CD8-positive, alpha-beta T cell (primary cell): ENCODE measurements at regions of chr15 and their contacts with region 1.

Region 1: DNA sequence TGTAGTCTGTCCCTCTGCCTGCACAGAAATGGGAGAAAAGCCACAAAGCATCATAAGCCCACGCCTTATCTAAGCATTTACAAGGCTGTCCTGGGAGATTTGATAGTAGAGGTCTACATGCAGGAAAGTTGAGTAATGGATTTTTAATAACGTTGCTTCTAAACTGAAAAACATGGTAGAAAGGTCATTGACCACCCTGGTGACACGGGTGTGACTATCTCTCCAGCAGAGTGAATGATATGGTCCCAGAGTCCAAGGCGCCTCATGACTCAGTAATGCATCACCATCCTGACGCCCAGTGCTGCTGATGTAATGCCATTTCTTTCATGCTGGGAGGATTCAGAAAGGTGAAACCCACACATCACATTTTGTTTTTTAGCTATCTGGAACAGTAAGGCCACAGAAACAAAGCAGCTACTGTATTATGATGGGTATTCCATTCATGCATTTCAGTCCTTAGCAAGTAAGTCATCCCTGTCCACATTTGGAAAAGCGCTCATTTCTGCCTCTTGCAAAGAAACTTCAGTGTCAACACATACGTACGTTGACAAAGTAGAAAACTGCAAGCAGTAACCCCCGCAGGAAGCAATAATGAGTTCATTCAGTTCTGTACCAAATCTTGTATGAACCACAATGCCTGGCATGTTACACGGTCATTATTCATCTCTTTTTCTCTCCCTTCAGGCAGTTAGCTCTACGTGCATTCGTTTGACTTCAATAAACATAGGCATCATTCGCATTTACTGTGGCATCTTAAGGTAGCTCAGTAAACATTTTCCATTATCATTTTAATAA is 483.5 kb downstream of the GABRG3 start:
- DNase-seq: no peak
- ATAC-seq: no peak
- H3K4me3 ChIP-seq: no peak overlapping the region
- H3K4me3 Mint-ChIP-seq: no peak overlapping the region
- H3K27ac ChIP-seq: no peak overlapping the region
- H3K27ac Mint-ChIP-seq: no peak overlapping the region
- H3K4me1 ChIP-seq: no peaks in the 10 kb centered on the region
- H3K4me1 Mint-ChIP-seq: no peaks in the 10 kb centered on the region
- H3K27me3 ChIP-seq: no peaks in the 10 kb centered on the region
- H3K27me3 Mint-ChIP-seq: no peaks in the 10 kb centered on the region
- CTCF ChIP-seq: no peak

Region 2: DNA sequence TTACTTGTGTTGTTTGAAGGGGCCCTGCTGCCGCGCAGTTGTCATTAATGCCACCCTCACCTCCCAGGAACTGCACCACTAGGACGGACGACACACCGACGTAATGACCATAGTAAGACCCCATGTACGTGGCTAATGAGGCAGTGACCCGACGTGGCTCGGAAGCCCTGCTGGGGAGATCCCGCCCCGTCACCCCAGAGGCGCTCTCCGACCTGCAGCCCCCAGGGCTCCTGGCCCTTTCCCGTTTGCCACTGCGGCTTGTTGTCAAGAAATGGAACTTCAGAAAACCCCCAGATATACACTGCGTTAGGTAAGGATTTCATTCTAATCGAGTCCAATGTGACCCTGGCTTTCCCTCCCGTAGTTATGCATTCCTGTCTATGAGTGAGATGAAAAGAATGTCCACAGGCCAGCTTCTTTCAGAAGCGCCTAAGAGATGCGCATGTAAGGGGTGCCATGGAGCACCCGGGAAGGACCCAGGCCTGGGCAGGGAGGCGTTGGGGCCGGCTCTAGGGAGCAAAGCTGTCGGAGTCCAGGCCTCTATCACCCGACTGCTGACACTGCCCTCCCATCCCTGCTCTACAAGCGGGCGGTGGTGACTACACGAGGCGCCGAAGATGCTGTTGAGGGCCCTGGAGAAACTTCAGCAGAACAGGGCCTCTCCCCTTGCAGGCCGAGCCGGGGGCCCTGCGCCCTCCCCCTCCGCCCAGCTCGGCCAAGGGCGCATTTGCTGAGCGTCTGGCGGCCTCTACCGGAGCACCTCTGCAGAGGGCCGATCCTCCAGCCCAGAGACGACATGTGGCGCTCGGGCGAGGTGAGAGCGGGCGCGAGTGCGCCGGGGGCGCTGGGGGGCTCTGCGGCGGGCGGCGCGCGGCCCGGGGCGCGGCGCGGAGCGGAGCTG is 587.9 kb before region 1 on chr15 and contains the start of gene GABRA5:
- CTCF ChIA-PET with region 1: no interaction called
- POLR2A ChIA-PET with region 1: no interaction called
- intact Hi-C with region 1: no loop called
- DNase-seq: no peak
- ATAC-seq: no peak
- H3K4me3 ChIP-seq: no peak within 1 kb of the TSS
- H3K4me3 Mint-ChIP-seq: no peak within 1 kb of the TSS
- H3K27ac ChIP-seq: no peak within 1 kb of the TSS
- H3K27ac Mint-ChIP-seq: no peak within 1 kb of the TSS
- H3K4me1 ChIP-seq: no peaks in the 10 kb centered on the region
- H3K4me1 Mint-ChIP-seq: no peaks in the 10 kb centered on the region
- H3K27me3 ChIP-seq: no peaks in the 10 kb centered on the region
- H3K27me3 Mint-ChIP-seq: peaks cover 25% of the 10 kb centered on the region
- CTCF ChIP-seq: no peak
- total RNA-seq, gene GABRA5: not detected

Region 3: GRCh38 chr15:27514526-27514925 is 60.0 kb after region 1 on chr15:
- CTCF ChIA-PET with region 1: no interaction called
- POLR2A ChIA-PET with region 1: no interaction called
- intact Hi-C with region 1: loop called in 1 of 2 experiments (anchors 10 kb)
- DNase-seq: no peak
- ATAC-seq: no peak
- H3K4me3 ChIP-seq: no peak overlapping the region
- H3K4me3 Mint-ChIP-seq: no peak overlapping the region
- H3K27ac ChIP-seq: no peak overlapping the region
- H3K27ac Mint-ChIP-seq: no peak overlapping the region
- H3K4me1 ChIP-seq: no peaks in the 10 kb centered on the region
- H3K4me1 Mint-ChIP-seq: no peaks in the 10 kb centered on the region
- H3K27me3 ChIP-seq: no peaks in the 10 kb centered on the region
- H3K27me3 Mint-ChIP-seq: no peaks in the 10 kb centered on the region
- CTCF ChIP-seq: no peak